ENCODE measurements at regions of chr12 and their contacts with region 1.

Region 1: GRCh38 chr12:51047655-51048540 is at the start of gene LETMD1:
- DNase-seq: peak; percentile 87 to 97
- H3K4me3 ChIP-seq: peak within 1 kb of the TSS; percentile 93 to 95
- H3K27ac ChIP-seq: peak within 1 kb of the TSS; percentile 94 to 95
- H3K4me1 ChIP-seq: peaks cover 8 to 17% of the 10 kb centered on the region in 2 donors
- H3K27me3 ChIP-seq: no peaks in the 10 kb centered on the region
- CTCF ChIP-seq: peak; percentile 85 to 93 (median 91)
- total RNA-seq, gene LETMD1: 8.6 TPM

Region 2: DNA sequence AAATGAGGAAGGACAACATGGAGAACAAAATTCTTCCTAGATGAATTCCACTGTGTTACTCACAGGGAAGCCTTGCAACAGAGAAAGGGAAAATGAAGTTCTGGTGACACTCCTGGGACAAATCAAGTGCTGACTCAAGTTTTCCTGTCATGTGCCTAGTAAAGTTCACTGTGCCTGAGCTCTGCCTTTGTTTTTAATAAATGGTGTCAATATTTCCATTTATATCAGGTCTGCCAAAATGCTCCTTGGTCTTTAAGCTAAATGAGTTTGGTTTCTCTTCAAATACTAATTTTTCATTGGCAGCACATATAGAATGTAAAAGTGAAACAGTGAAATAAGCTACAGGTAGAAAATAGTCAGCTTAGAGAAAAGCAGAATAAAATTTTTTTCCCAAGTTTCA is 62.6 kb before region 1 on chr12:
- intact Hi-C with region 1: no loop called
- DNase-seq: peak in 1 of 2 donors; percentile 80
- H3K4me3 ChIP-seq: peak overlapping the region in 1 of 2 donors; percentile 36
- H3K27ac ChIP-seq: peak overlapping the region; percentile 76 to 81
- H3K4me1 ChIP-seq: peaks cover 7 to 35% of the 10 kb centered on the region in 2 donors
- H3K27me3 ChIP-seq: no peaks in the 10 kb centered on the region
- CTCF ChIP-seq: no peak

Region 3: DNA sequence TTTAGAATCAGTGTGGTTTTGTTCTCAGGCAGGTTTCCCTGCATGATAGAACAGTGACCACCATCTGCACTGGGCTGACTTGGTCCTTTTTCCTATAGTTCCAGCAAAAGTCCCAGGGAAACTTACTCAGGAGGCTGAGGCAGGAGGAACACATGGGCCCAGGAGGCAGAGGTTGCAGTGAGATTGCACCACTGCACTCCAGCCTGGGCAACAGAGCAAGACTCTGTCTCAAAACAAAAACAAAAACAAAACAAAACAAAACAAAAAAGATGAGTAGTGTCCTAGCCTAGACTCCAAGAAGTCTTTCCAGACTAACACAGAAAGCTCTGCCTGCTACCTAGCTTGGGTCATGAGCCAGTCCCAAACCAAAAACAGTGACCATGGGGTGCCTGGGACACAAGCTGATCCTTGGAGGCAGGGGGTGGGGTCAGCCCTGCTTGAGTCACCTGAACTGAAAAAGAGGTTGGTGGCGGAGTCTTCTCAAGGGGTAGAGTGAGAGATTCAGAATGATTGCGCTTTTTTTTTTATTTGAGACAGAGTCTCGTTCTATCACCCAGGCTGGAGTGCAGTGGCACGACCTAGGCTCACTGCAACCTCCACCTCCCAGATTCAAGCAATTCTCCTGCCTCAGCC is 14.3 kb before region 1 on chr12:
- intact Hi-C with region 1: no loop called
- DNase-seq: no peak
- H3K4me3 ChIP-seq: no peak overlapping the region
- H3K27ac ChIP-seq: no peak overlapping the region
- H3K4me1 ChIP-seq: no peaks in the 10 kb centered on the region
- H3K27me3 ChIP-seq: no peaks in the 10 kb centered on the region
- CTCF ChIP-seq: no peak

Region 4: DNA sequence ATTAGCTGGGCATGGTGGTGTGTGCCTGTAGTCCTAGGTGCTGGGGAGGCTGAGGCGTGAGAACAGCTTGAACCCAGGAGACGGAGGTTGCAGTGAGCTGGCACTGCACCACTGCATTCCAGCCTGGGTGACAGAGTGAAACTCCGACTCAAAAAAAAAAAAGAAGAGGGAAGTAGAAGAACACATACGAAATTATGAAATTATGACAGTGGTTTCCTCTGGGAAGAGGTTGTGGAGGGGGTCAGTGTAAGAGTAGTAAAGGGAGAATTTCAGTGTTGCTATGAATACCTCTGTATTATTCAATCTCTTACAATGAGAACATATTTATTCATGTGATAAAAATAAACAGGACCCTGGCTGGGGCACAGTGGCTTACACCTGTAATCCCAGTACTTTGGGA is 60.2 kb after region 1 on chr12:
- intact Hi-C with region 1: no loop called
- DNase-seq: no peak
- H3K4me3 ChIP-seq: no peak overlapping the region
- H3K27ac ChIP-seq: no peak overlapping the region
- H3K4me1 ChIP-seq: no peaks in the 10 kb centered on the region
- H3K27me3 ChIP-seq: no peaks in the 10 kb centered on the region
- CTCF ChIP-seq: no peak

Region 5: DNA sequence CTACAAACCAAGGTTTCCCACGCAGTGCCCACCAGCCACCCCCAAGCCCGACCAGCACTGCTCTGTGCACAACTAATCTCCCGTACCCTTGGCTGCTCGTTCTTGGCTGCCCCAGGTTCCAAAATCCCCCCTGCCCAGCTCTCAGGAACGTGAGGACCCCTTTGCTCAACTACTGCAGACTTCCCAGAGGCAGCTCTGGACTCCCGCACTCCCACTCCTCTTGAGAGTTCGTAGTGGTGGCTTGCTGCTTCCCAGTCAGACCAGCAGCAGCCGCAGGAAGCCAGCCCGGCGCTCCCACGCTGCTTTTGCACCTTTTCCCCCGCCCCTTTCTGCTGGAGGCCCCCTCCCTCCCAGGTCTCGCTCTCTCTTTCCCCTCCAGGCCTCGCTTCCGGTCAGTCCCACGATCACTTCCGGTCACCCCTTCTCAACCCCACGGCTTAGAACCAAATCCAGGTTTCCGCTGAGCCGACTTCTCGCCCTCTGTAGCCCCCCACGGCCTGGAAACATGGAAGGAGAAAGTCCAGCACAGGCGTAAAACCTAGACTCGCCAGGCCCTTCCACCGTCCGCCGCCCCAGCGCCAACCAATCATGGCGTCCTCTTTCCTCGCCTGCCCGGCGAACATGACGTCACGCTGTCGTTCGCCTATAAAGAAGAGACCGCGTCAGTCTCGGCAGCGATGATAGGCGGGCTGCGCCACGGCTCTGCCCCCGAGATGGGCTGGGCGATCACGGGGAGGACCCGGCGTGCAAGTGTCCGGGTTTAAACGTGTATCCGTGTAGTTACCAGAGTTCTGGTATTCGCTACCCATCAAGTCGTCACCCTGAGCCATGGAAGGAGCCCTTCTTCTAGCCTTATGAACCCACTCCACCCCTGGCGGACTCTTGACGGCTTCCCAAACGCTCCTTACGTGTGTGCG is 124.9 kb after region 1 on chr12 and contains the start of gene TFCP2:
- intact Hi-C with region 1: loop called (anchors 2 kb)
- DNase-seq: peak; percentile 91 to 98
- H3K4me3 ChIP-seq: peak within 1 kb of the TSS; percentile 85 to 94
- H3K27ac ChIP-seq: peak within 1 kb of the TSS; percentile 91 to 100
- H3K4me1 ChIP-seq: peaks cover 6% of the 10 kb centered on the region in 2 donors
- H3K27me3 ChIP-seq: no peaks in the 10 kb centered on the region
- CTCF ChIP-seq: no peak
- total RNA-seq, gene TFCP2: 3.0 TPM

Region 6: GRCh38 chr12:51238510-51239334 is 190.8 kb after region 1 on chr12 and contains the start of gene DAZAP2:
- intact Hi-C with region 1: loop called (anchors 2 kb)
- DNase-seq: peak; percentile 85 to 97
- H3K4me3 ChIP-seq: peak within 1 kb of the TSS; percentile 74 to 96
- H3K27ac ChIP-seq: peak within 1 kb of the TSS; percentile 99
- H3K4me1 ChIP-seq: peaks cover 14 to 25% of the 10 kb centered on the region in 2 donors
- H3K27me3 ChIP-seq: no peaks in the 10 kb centered on the region
- CTCF ChIP-seq: no peak
- total RNA-seq, gene DAZAP2: 212 TPM

Region 7: GRCh38 chr12:51341259-51342007 is 293.5 kb after region 1 on chr12:
- intact Hi-C with region 1: loop called (anchors 5 kb)
- DNase-seq: peak in 1 of 2 donors; percentile 82
- H3K4me3 ChIP-seq: peak overlapping the region in 1 of 2 donors; percentile 40
- H3K27ac ChIP-seq: no peak overlapping the region
- H3K4me1 ChIP-seq: no peaks in the 10 kb centered on the region
- H3K27me3 ChIP-seq: no peaks in the 10 kb centered on the region
- CTCF ChIP-seq: peak; percentile 91 to 94 (median 93)

Measured in ascending aorta (tissue), 2 donors.